ENCODE measurements at regions of chr15 and their contacts with region 1.

Region 1: GRCh38 chr15:38996111-38996631 is 431.6 kb upstream of the RASGRP1 start:
- DNase-seq: no peak
- H3K4me3 ChIP-seq: no peak overlapping the region
- H3K27ac ChIP-seq: peak overlapping the region in 3 of 4 donors; percentile 21 to 69 (median 60)
- H3K4me1 ChIP-seq: peaks cover 27 to 42% (median 32%) of the 10 kb centered on the region in 4 donors
- H3K27me3 ChIP-seq: no peaks in the 10 kb centered on the region
- CTCF ChIP-seq: no peak
- EP300 ChIP-seq: peak; percentile 41
- POLR2A ChIP-seq: no peak

Region 2: GRCh38 chr15:38795471-38796245 is 200.5 kb before region 1 on chr15:
- intact Hi-C with region 1: no loop called
- DNase-seq: no peak
- H3K4me3 ChIP-seq: no peak overlapping the region
- H3K27ac ChIP-seq: no peak overlapping the region
- H3K4me1 ChIP-seq: peaks cover 0 to 11% (median 10%) of the 10 kb centered on the region in 4 donors
- H3K27me3 ChIP-seq: no peaks in the 10 kb centered on the region
- CTCF ChIP-seq: no peak
- EP300 ChIP-seq: no peak
- POLR2A ChIP-seq: no peak

Region 3: DNA sequence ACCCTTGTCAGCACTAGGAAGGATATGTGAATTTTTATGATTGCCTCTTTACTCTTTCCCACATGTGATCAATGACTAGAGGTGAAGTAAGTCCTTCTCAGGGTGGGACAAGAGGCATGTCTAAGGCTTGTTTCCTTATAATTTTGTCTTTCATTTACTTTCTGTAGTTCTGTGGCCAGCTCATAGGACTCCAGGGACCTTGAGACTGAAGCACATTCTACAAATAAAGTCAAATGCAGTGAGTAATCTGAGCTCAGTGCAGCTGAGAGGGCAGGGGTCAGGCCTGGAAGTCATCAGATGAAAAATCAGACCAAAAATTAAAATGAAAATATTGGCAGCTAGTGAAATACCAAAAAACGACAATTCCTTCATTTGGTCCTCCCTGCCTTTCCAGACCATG is 160.0 kb after region 1 on chr15:
- intact Hi-C with region 1: loop called (anchors 5 kb)
- DNase-seq: no peak
- H3K4me3 ChIP-seq: no peak overlapping the region
- H3K27ac ChIP-seq: peak overlapping the region; percentile 16 to 51 (median 28)
- H3K4me1 ChIP-seq: peaks cover 7 to 34% (median 28%) of the 10 kb centered on the region in 4 donors
- H3K27me3 ChIP-seq: no peaks in the 10 kb centered on the region
- CTCF ChIP-seq: no peak
- EP300 ChIP-seq: no peak
- POLR2A ChIP-seq: no peak

Measured in esophagus muscularis mucosa (tissue), 4 donors.